Activated T-helper 2 cell treated with anti-CD3 and anti-CD28 coated beads, Interferon-gamma antibody, Interleukin-2, Interleukin-4, amounts not matched to agents 10 μg/mL and 5 μg/mL and 100 μg/mL, durations not matched to agents 14 hours and 24 hours and 36 hours (primary cell): ENCODE measurements at regions of chr6 and their contacts with region 1.

Region 1: DNA sequence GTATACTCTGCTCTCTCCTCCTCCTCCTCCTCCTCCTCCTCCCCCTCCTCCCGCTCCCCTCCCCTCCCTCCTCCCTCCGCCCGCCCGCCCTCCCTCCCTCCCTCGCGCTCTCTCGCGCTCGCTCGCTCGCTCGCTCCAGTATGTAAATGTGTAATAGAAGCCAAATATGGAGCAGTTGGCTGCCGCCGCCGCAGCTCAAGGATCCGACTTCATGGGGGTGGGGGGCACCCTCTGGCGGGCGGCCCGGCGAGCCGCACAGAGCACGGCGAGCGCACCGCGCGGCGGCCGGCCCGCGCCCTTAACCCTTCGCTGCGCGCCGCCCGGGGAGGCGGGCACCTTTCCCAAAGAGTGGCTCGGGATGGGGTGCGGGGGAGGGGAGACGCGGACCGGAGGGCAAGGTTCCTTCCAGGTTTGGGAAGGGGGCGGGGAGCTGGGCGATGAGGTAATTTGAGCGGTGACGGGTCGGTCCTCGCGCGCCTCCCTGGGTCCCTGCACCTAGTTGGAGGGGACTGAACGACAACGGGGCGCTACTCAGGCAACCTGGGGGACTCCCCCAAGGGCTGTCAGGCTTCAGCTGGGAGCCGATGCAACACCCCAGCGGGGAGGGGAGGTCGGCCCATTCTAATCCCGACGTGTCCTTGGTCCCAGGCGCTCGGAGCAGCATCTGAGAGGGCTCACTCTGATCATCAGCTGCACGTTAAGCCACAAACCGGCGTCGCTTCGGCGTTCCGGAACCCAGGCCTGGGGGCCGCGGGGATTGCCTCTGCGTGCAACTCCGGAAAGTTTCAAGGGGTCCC is 409 bp upstream of the ATXN1 start:
- DNase-seq: peak; percentile 83
- H3K4me3 Mint-ChIP-seq: peak overlapping the region; percentile 99
- H3K27ac Mint-ChIP-seq: peak overlapping the region; percentile 99
- H3K4me1 Mint-ChIP-seq: peaks cover 62% of the 10 kb centered on the region
- H3K27me3 Mint-ChIP-seq: no peaks in the 10 kb centered on the region

Region 2: GRCh38 chr6:16420715-16421461 is 340.8 kb before region 1 on chr6:
- intact Hi-C with region 1: loop called (anchors 2 kb)
- DNase-seq: peak; percentile 48
- H3K4me3 Mint-ChIP-seq: peak overlapping the region; percentile 72
- H3K27ac Mint-ChIP-seq: peak overlapping the region; percentile 98
- H3K4me1 Mint-ChIP-seq: peaks cover 54% of the 10 kb centered on the region
- H3K27me3 Mint-ChIP-seq: no peaks in the 10 kb centered on the region

Region 3: DNA sequence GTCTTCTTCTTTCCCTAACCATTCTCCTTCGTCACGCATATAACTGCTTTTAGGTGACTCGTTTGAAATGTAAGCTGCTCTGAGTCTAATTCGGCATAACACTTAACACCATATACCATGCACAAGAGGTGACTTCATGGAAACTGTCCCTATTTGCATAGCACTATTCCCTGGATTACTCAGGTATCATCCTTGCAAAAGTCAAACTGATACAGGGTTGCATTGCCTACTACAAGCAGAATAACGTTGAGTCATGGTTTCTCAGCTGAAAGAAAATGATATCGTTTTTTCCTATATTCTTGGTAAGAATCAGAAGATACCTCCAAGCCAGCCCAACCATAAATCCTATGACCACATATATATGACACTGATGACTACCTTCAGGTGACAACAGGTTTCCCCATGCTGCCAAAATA is 227.9 kb before region 1 on chr6:
- intact Hi-C with region 1: loop called (anchors 2 kb)
- DNase-seq: no peak
- H3K4me3 Mint-ChIP-seq: no peak overlapping the region
- H3K27ac Mint-ChIP-seq: peak overlapping the region; percentile 52
- H3K4me1 Mint-ChIP-seq: peaks cover 36% of the 10 kb centered on the region
- H3K27me3 Mint-ChIP-seq: no peaks in the 10 kb centered on the region

Region 4: DNA sequence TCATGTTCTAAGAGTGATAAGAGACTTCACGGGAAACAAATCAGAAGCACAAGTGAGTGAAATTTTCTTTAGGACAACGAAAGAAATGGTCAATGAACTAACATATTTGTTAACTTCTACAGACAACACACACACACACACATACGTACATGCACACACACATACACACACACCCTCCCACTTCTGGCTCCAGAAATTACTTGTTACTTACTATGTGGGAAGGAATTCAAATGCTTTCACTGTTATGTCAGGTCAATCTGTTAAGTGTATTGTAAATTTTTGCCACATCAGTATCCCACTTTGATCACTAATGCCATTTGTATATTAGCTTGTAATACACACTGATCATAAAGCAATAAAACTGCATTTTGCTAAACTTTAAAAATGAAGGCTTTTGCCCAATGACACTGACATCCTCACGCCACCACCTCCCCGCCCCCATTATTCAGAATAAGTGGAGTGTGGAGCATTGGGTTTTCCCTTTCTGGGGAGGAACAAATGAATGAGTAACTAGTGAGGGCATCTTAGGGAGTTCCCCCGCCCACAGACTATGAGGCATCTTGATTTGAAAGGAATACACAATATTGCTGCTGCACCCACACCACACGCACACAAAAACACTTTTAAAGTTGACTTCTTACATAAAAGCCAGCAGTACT is 76.6 kb before region 1 on chr6:
- intact Hi-C with region 1: loop called (anchors 1 kb)
- DNase-seq: peak; percentile 49
- H3K4me3 Mint-ChIP-seq: no peak overlapping the region
- H3K27ac Mint-ChIP-seq: peak overlapping the region; percentile 86
- H3K4me1 Mint-ChIP-seq: peaks cover 83% of the 10 kb centered on the region
- H3K27me3 Mint-ChIP-seq: no peaks in the 10 kb centered on the region

Region 5: GRCh38 chr6:16741112-16742016 is 20.3 kb before region 1 on chr6:
- intact Hi-C with region 1: loop called (anchors 2 kb)
- DNase-seq: no peak
- H3K4me3 Mint-ChIP-seq: no peak overlapping the region
- H3K27ac Mint-ChIP-seq: peak overlapping the region; percentile 23
- H3K4me1 Mint-ChIP-seq: peaks cover 60% of the 10 kb centered on the region
- H3K27me3 Mint-ChIP-seq: no peaks in the 10 kb centered on the region

Region 6: DNA sequence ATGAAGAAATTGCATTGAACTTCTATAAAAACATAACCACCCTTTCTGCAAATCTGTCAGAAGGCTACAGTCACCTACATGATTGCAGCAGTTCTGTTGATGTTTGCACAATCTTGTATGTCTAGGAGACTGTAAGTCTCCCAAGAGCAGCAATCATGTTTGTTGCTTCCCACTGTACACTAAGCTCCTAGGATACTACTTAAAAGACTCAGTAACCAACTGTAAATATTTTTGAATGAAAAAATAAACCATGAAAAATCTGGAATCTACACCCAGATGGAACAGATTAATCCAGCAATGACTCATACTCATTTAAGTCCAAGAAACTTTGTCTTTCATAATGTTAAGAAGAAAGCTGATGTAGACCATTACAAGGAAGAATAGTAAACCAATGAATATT is 168.1 kb after region 1 on chr6:
- intact Hi-C with region 1: no loop called
- DNase-seq: no peak
- H3K4me3 Mint-ChIP-seq: no peak overlapping the region
- H3K27ac Mint-ChIP-seq: no peak overlapping the region
- H3K4me1 Mint-ChIP-seq: peaks cover 2% of the 10 kb centered on the region
- H3K27me3 Mint-ChIP-seq: peaks cover 22% of the 10 kb centered on the region

Region 7: DNA sequence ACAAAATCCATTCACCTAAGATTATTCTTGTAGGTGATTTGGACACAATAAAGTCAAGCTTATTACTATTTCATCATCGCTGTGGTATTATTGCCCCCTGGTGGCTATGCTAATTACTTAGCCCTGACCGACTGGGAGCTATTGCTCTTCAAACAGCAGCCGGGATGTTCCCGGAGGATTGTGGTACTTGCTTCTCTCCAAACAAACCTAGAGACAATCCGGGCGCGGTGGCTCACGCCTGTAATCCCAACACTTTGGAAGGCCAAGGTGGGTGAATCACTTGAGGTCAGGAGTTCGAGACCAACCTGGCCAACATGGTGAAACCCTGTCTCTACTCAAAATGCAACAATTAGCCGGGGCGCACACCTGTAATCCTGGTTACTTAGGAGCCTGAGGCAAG is 324.8 kb after region 1 on chr6:
- intact Hi-C with region 1: loop called (anchors 10 kb)
- DNase-seq: no peak
- H3K4me3 Mint-ChIP-seq: no peak overlapping the region
- H3K27ac Mint-ChIP-seq: no peak overlapping the region
- H3K4me1 Mint-ChIP-seq: no peaks in the 10 kb centered on the region
- H3K27me3 Mint-ChIP-seq: peaks cover 10% of the 10 kb centered on the region